ENCODE measurements at regions of chr3 and their contacts with region 1.

Region 1: DNA sequence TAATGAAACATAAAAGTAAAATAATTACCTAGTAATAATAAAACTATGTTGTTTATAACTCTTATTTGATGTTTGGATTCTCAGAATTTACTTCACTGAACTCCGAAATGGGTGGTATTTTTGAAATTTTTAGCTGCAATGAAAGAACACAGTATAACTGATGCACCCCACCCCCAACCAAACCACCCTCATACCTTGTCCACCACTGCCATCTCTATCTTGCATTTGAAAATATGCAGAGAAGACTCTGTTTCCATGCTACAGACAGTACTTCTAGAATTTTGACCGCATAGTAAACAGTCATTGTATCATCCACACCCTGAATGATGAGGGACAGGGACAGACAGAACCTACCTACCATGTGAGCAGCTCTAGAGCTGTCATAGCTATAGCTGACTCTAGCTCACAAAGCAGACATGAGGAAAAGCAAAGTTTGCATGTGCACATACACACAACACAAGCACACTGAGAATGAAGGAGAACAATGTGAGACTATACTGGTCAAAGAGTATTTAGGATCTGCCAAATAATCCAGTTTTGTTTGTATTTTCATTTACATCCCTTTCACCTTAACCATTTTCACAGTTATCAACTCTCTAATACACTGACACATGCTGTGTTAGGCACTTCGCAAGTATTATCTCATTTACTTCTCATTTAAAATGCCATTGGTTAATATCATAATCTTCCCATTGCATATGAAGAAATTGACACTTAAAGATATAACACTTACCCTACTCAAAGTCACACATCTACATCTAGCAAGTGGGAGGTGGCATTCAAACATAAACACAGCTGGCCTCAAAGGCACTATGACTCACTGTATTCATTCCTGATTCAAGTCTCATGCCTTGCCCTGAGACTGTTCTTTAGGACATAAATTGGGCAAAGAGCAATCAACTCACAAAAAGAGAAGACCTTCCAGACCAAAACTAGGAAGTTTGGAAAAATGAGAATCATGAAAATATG is 1014.7 kb upstream of the CFAP20DC start:
- DNase-seq: peak in 3 of 9 experiments; percentile 19 to 49 (median 21)
- ATAC-seq: peak; percentile 57
- H3K4me3 ChIP-seq: no peak overlapping the region
- H3K4me3 Mint-ChIP-seq: no peak overlapping the region
- H3K27ac ChIP-seq: peak overlapping the region in 1 of 2 experiments; percentile 49
- H3K27ac Mint-ChIP-seq: peak overlapping the region; percentile 84
- H3K4me1 ChIP-seq: peaks cover 33% of the 10 kb centered on the region
- H3K4me1 Mint-ChIP-seq: peaks cover 50% of the 10 kb centered on the region
- H3K27me3 ChIP-seq: no peaks in the 10 kb centered on the region
- H3K27me3 Mint-ChIP-seq: no peaks in the 10 kb centered on the region
- CTCF ChIP-seq: no peak

Region 2: GRCh38 chr3:59908280-59908679 is 156.2 kb before region 1 on chr3:
- CTCF ChIA-PET with region 1: no interaction called
- POLR2A ChIA-PET with region 1: no interaction called
- intact Hi-C with region 1: no loop called
- DNase-seq: no peak
- ATAC-seq: no peak
- H3K4me3 ChIP-seq: no peak overlapping the region
- H3K4me3 Mint-ChIP-seq: no peak overlapping the region
- H3K27ac ChIP-seq: no peak overlapping the region
- H3K27ac Mint-ChIP-seq: no peak overlapping the region
- H3K4me1 ChIP-seq: no peaks in the 10 kb centered on the region
- H3K4me1 Mint-ChIP-seq: peaks cover 6% of the 10 kb centered on the region
- H3K27me3 ChIP-seq: no peaks in the 10 kb centered on the region
- H3K27me3 Mint-ChIP-seq: no peaks in the 10 kb centered on the region
- CTCF ChIP-seq: no peak

Region 3: GRCh38 chr3:60046210-60046609 is 18.3 kb before region 1 on chr3:
- CTCF ChIA-PET with region 1: interaction called, 3 read pairs
- POLR2A ChIA-PET with region 1: no interaction called
- intact Hi-C with region 1: loop called in 1 of 2 experiments (anchors 2 kb)
- DNase-seq: no peak
- ATAC-seq: no peak
- H3K4me3 ChIP-seq: no peak overlapping the region
- H3K4me3 Mint-ChIP-seq: no peak overlapping the region
- H3K27ac ChIP-seq: no peak overlapping the region
- H3K27ac Mint-ChIP-seq: peak overlapping the region; percentile 20
- H3K4me1 ChIP-seq: peaks cover 12% of the 10 kb centered on the region
- H3K4me1 Mint-ChIP-seq: peaks cover 29% of the 10 kb centered on the region
- H3K27me3 ChIP-seq: no peaks in the 10 kb centered on the region
- H3K27me3 Mint-ChIP-seq: no peaks in the 10 kb centered on the region
- CTCF ChIP-seq: no peak